Dorsolateral prefrontal cortex (tissue), 120 donors: ENCODE measurements at regions of chr22 and their contacts with region 1.

Region 1: DNA sequence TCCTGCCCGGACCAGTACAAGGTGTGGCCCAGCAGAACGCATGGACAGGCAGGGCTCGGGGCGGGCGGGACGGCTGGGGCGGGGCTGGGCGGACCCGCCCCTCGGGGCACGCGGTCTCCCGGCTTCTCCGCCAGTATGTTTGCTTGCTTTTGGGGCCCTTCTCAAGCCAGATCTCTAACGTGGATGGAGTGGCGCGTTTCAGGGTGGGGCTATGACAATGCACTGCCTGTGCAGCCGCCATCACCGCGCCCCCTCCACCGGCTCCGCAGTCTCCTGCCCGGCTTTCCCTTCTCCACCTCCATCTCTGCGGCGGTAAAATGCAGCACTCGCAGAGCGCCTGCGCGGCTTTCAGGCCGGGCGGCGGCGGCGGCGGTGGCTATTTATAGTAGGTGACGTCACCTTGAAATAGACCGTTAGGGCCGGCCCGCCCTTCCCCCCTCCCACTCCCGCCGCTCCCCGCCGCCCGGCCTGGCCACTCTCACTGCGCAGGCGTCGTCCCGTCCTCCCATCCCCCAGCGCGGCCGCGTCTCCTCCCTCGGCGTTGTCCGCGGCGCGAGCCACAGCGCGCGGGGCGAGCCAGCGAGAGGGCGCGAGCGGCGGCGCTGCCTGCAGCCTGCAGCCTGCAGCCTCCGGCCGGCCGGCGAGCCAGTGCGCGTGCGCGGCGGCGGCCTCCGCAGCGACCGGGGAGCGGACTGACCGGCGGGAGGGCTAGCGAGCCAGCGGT is at the start of gene YWHAH:
- DNase-seq: peak; percentile 88 to 97 (median 94)
- H3K4me3 ChIP-seq: peak within 1 kb of the TSS; percentile 56 to 99 (median 91)
- H3K27ac ChIP-seq: peak within 1 kb of the TSS; percentile 92 to 100 (median 99)
- H3K27me3 ChIP-seq: no peaks in the 10 kb centered on the region
- CTCF ChIP-seq: peak in 22 of 56 donors; percentile 8 to 49 (median 23)
- total RNA-seq, gene YWHAH: 191 to 1,478 (median 946) TPM

Region 2: GRCh38 chr22:31646186-31647089 is 297.7 kb before region 1 on chr22:
- intact Hi-C with region 1: no loop called
- DNase-seq: no peak
- H3K4me3 ChIP-seq: no peak overlapping the region
- H3K27ac ChIP-seq: no peak overlapping the region
- H3K27me3 ChIP-seq: no peaks in the 10 kb centered on the region
- CTCF ChIP-seq: no peak

Region 3: DNA sequence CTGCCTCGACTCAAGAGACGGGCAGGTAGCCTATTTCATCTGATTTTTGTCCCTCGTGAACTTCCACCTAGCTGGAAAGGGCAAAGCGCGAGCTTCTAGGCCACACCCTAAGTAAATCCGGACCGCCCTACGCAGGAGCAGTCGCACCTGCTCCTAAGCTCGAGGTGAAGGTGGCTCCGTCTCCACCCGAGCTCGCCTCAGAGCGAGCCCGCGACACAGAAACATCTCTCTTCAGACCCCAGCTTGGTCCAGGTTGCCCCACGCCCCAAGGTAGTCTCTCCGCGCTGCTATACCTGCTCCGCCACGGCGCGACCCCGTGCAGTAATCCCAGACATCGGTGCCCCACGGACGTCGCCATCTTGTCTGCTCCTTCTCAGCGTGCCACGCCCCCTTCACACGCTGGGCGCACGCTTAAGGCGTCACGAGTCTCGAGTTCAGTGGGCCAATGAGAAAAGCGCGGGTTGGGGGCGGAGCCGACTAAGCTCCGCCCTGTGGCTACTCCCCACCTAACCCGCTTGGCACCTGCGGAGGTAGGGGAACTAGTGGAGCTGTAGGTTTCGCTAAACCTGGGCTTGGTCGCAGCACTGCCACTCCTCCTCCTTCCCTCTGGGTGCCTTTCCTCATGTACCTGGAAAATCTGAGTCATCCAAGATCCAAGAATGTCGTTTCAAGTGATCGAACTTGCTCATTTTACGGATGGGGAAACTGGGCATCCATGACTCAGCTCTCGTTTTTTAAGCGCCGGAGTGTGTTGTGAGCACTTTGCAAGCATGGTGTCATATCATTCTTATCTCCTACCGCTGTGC is 282.1 kb before region 1 on chr22 and contains the start of gene PISD:
- intact Hi-C with region 1: loop called (anchors 10 kb)
- DNase-seq: peak; percentile 88 to 95 (median 94)
- H3K4me3 ChIP-seq: peak within 1 kb of the TSS; percentile 58 to 100 (median 93)
- H3K27ac ChIP-seq: peak within 1 kb of the TSS in 53 of 59 donors; percentile 0 to 92 (median 70)
- H3K27me3 ChIP-seq: no peaks in the 10 kb centered on the region
- CTCF ChIP-seq: peak in 25 of 56 donors; percentile 7 to 47 (median 22)
- total RNA-seq, gene PISD: 48.4 to 108 (median 75.5) TPM

Region 4: DNA sequence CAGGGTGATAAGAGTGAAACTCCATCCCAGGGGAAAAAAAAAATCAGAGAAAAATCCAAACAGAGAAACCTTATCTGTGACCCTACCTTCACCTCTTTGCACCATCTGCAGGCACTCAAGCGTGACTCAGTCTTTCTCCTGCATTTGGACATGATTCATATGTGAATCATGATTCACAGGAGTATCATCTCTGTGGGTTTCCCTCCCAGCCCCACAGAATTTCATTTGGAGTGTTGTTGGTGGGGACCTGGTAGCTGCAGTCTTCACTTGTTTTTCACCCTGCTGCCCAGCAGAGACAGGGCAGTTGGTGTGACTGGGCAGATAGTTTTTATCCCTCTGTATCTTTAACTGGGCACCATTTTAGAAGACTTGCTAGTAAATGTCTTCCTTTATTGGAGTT is 114.6 kb before region 1 on chr22:
- intact Hi-C with region 1: loop called (anchors 10 kb)
- DNase-seq: peak in 3 of 10 donors; percentile 31 to 48 (median 33)
- H3K4me3 ChIP-seq: no peak overlapping the region
- H3K27ac ChIP-seq: peak overlapping the region in 46 of 59 donors; percentile 5 to 84 (median 64)
- H3K27me3 ChIP-seq: no peaks in the 10 kb centered on the region
- CTCF ChIP-seq: no peak

Region 5: GRCh38 chr22:31836010-31836409 is 108.1 kb before region 1 on chr22:
- intact Hi-C with region 1: loop called in 1 of 2 experiments (anchors 10 kb)
- DNase-seq: peak in 1 of 10 donors; percentile 38
- H3K4me3 ChIP-seq: no peak overlapping the region
- H3K27ac ChIP-seq: peak overlapping the region in 22 of 59 donors; percentile 3 to 68 (median 29)
- H3K27me3 ChIP-seq: no peaks in the 10 kb centered on the region
- CTCF ChIP-seq: peak in 51 of 56 donors; percentile 9 to 66 (median 41)

Region 6: GRCh38 chr22:31872209-31872608 is 71.9 kb before region 1 on chr22:
- intact Hi-C with region 1: loop called in 1 of 2 experiments (anchors 5 kb)
- DNase-seq: no peak
- H3K4me3 ChIP-seq: no peak overlapping the region
- H3K27ac ChIP-seq: peak overlapping the region in 35 of 59 donors; percentile 7 to 87 (median 74)
- H3K27me3 ChIP-seq: no peaks in the 10 kb centered on the region
- CTCF ChIP-seq: peak in 3 of 56 donors; percentile 9 to 20 (median 17)

Region 7: GRCh38 chr22:31891366-31892079 is 52.6 kb before region 1 on chr22:
- intact Hi-C with region 1: loop called (anchors 2 to 10 kb)
- DNase-seq: no peak
- H3K4me3 ChIP-seq: no peak overlapping the region
- H3K27ac ChIP-seq: peak overlapping the region in 58 of 59 donors; percentile 7 to 89 (median 70)
- H3K27me3 ChIP-seq: no peaks in the 10 kb centered on the region
- CTCF ChIP-seq: no peak